ENCODE measurements at regions of chr21 and their contacts with region 1.

Region 1: GRCh38 chr21:22791986-22792560 is 1793.9 kb downstream of the NCAM2 start:
- DNase-seq: peak; percentile 88
- H3K4me3 ChIP-seq: no peak overlapping the region
- H3K27ac ChIP-seq: no peak overlapping the region
- H3K4me1 ChIP-seq: peaks cover 12% of the 10 kb centered on the region
- H3K27me3 ChIP-seq: no peaks in the 10 kb centered on the region
- CTCF ChIP-seq: peak; percentile 79

Region 2: DNA sequence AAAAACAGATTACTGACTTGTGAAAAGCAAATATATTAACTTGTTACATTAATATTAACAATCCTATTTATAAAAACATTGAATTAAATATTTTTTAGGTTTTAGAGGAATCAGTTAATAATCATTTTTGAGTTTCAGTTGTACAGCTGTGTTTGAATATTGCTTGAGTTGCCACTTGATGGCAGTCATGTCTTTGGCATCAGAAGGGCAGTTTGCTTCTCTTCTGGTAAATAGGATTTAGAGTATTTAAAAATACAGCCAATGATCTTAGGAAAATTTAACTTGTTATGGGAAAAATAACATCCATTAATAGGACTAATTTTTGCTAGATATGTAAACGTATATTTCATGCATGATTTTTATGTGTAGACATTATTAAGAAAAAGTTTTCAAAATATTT is 1559.8 kb before region 1 on chr21:
- CTCF ChIA-PET with region 1: no interaction called
- POLR2A ChIA-PET with region 1: no interaction called
- intact Hi-C with region 1: loop called (anchors 2 kb)
- DNase-seq: peak; percentile 68
- H3K4me3 ChIP-seq: no peak overlapping the region
- H3K27ac ChIP-seq: peak overlapping the region; percentile 53
- H3K4me1 ChIP-seq: peaks cover 48% of the 10 kb centered on the region
- H3K27me3 ChIP-seq: no peaks in the 10 kb centered on the region
- CTCF ChIP-seq: peak; percentile 80

Region 3: DNA sequence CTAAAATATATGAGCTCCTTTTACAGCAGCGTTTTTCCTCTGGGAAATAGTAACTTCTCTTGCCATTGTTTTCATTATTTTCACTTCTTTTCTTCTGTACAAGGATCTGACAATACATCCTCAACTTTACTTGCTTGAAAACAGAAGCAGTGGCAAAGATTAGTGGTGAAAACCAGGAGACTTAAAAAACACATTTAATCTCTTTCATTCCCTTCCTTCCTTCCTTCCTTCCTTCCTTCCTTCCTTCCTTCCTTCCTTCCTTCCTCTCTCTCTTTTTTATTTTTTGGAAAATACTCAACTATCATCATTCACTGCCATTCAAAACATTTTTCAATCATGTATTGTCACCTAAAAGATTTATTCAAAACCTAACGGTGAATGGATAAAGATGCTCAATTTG is 382.5 kb before region 1 on chr21:
- CTCF ChIA-PET with region 1: no interaction called
- POLR2A ChIA-PET with region 1: no interaction called
- intact Hi-C with region 1: loop called (anchors 2 kb)
- DNase-seq: peak; percentile 95
- H3K4me3 ChIP-seq: no peak overlapping the region
- H3K27ac ChIP-seq: peak overlapping the region; percentile 97
- H3K4me1 ChIP-seq: peaks cover 33% of the 10 kb centered on the region
- H3K27me3 ChIP-seq: no peaks in the 10 kb centered on the region
- CTCF ChIP-seq: no peak

Region 4: GRCh38 chr21:22544747-22545146 is 247.3 kb before region 1 on chr21:
- CTCF ChIA-PET with region 1: no interaction called
- POLR2A ChIA-PET with region 1: no interaction called
- intact Hi-C with region 1: no loop called
- DNase-seq: no peak
- H3K4me3 ChIP-seq: no peak overlapping the region
- H3K27ac ChIP-seq: no peak overlapping the region
- H3K4me1 ChIP-seq: no peaks in the 10 kb centered on the region
- H3K27me3 ChIP-seq: no peaks in the 10 kb centered on the region
- CTCF ChIP-seq: no peak

Region 5: DNA sequence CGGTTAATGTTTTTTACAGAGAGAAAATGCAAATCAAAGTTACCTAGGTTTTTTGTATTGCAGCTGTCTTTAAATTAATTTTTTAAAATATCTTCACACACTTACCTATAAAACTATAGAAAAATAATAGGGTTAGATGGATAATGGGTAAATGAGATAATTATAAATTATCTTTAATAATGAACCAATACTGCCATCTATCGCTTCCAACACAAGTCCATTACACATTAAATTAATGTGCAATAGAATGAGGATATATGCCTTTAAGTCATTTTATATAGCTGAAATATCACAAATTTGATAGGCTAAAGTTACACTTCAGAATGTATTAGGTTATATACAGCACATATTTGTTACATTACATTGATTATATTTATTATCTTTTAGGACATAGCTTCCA is 602.4 kb after region 1 on chr21:
- CTCF ChIA-PET with region 1: no interaction called
- POLR2A ChIA-PET with region 1: no interaction called
- intact Hi-C with region 1: loop called (anchors 2 kb)
- DNase-seq: peak; percentile 3
- H3K4me3 ChIP-seq: no peak overlapping the region
- H3K27ac ChIP-seq: no peak overlapping the region
- H3K4me1 ChIP-seq: no peaks in the 10 kb centered on the region
- H3K27me3 ChIP-seq: no peaks in the 10 kb centered on the region
- CTCF ChIP-seq: peak; percentile 47